Vagina (tissue), 2 donors: ENCODE measurements at regions of chr2 and their contacts with region 1.

Region 1: DNA sequence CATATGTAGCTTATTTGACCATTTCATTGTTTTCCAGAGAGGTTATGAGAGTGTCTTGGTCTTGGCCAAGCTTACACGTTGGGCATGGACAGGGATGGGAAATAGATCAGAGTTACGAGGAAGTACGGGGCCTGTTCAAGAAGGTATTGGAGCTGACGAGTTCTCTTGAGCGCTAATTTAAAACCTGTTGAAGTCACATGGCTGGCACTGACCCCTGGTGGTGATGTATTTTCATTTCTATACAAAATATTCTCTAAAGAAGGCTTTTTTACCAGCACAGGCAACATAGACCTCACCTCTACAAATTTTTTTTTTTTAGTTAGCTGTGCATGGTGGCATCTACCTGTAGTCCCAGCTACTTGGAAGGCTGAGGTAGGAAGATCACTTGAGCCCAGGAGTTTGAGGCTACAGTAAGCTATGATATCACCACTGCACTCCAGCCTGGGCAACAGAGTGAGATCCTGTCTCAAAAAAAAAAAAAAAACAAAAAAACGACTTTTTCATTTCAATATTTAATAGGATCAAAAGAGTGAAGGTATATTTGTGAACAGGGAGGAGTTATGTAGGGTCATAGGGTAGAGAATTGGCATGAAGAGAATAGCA is 19.6 kb downstream of the UGP2 start:
- DNase-seq: no peak
- H3K4me3 ChIP-seq: no peak overlapping the region
- H3K27ac ChIP-seq: no peak overlapping the region
- H3K4me1 ChIP-seq: peaks cover 7% of the 10 kb centered on the region
- H3K27me3 ChIP-seq: no peaks in the 10 kb centered on the region
- CTCF ChIP-seq: peak; percentile 30 to 58 (median 32)
- POLR2A ChIP-seq: no peak

Region 2: DNA sequence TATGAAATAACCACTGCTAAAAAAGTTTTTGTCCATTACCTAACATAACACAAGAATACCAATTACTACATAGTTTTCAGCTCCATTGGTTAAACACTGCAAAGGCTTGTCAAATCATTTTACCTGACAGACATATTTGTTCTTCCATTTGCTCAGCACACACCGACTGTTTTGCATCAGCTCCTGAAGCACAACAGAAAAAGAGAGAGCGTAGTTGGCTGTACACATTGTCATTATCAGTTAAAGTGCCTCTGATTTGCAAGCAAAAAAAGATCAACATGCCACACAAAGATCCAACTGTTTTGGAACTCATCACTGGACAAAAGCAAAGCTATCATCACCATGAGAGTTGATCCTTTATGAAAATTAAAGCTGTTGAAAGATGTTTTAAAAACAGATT is 376.8 kb before region 1 on chr2:
- intact Hi-C with region 1: no loop called
- DNase-seq: no peak
- H3K4me3 ChIP-seq: no peak overlapping the region
- H3K27ac ChIP-seq: no peak overlapping the region
- H3K4me1 ChIP-seq: no peaks in the 10 kb centered on the region
- H3K27me3 ChIP-seq: no peaks in the 10 kb centered on the region
- CTCF ChIP-seq: no peak
- POLR2A ChIP-seq: no peak

Region 3: GRCh38 chr2:63698825-63699548 is 162.3 kb before region 1 on chr2:
- intact Hi-C with region 1: loop called (anchors 5 kb)
- DNase-seq: peak in 1 of 2 donors; percentile 94
- H3K4me3 ChIP-seq: no peak overlapping the region
- H3K27ac ChIP-seq: peak overlapping the region; percentile 36
- H3K4me1 ChIP-seq: peaks cover 9% of the 10 kb centered on the region
- H3K27me3 ChIP-seq: no peaks in the 10 kb centered on the region
- CTCF ChIP-seq: peak in 2 of 3 experiments; percentile 16 to 33
- POLR2A ChIP-seq: no peak

Region 4: GRCh38 chr2:63790913-63791312 is 70.4 kb before region 1 on chr2:
- intact Hi-C with region 1: no loop called
- DNase-seq: no peak
- H3K4me3 ChIP-seq: no peak overlapping the region
- H3K27ac ChIP-seq: no peak overlapping the region
- H3K4me1 ChIP-seq: no peaks in the 10 kb centered on the region
- H3K27me3 ChIP-seq: no peaks in the 10 kb centered on the region
- CTCF ChIP-seq: no peak
- POLR2A ChIP-seq: no peak

Region 5: GRCh38 chr2:63819765-63820717 is 41.3 kb before region 1 on chr2:
- intact Hi-C with region 1: no loop called
- DNase-seq: no peak
- H3K4me3 ChIP-seq: no peak overlapping the region
- H3K27ac ChIP-seq: peak overlapping the region; percentile 36
- H3K4me1 ChIP-seq: no peaks in the 10 kb centered on the region
- H3K27me3 ChIP-seq: no peaks in the 10 kb centered on the region
- CTCF ChIP-seq: no peak
- POLR2A ChIP-seq: no peak